SK-N-SH (cell line): ENCODE measurements at regions of chr1 and their contacts with region 1.

Region 1: DNA sequence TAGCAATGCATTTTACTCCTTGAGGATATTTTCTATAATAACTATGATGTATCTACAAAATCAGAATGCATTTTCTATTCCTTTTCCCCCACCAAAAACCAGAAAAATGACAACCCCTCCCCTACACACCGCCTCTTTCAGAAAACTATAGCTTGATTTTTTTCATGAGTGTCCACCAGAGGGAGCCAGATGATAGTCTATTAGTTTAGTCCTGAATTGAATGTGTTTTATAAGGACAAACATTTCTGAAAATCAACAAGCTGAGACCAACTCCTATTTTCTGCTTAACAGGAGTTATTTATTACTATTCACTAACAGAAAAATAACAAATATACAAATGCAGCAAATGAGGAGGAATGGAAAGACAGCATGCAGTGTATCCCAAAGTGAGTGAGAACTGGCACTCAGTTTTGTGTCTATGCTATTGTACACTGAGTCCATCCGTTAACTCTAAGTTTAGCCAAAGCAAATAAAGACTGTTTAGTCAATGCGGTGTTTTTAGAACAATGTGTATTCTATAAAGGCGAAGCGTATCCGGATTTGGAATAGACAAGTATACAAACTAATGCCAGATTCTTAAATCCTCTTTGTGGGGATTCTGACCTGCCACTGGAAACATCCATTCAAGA is 182.6 kb downstream of the VAV3 start:
- DNase-seq: peak; percentile 25
- H3K4me3 ChIP-seq: no peak overlapping the region; a peak in 1 of 4 replicates
- H3K27ac ChIP-seq: no peak overlapping the region
- H3K4me1 ChIP-seq: peaks cover 0 to 9% of the 10 kb centered on the region in 2 experiments; a peak in 2 of 4 replicates
- H3K27me3 ChIP-seq: no peaks in the 10 kb centered on the region
- CTCF ChIP-seq: peak; percentile 81
- EP300 ChIP-seq: no peak
- RAD21 ChIP-seq: peak; percentile 89

Region 2: DNA sequence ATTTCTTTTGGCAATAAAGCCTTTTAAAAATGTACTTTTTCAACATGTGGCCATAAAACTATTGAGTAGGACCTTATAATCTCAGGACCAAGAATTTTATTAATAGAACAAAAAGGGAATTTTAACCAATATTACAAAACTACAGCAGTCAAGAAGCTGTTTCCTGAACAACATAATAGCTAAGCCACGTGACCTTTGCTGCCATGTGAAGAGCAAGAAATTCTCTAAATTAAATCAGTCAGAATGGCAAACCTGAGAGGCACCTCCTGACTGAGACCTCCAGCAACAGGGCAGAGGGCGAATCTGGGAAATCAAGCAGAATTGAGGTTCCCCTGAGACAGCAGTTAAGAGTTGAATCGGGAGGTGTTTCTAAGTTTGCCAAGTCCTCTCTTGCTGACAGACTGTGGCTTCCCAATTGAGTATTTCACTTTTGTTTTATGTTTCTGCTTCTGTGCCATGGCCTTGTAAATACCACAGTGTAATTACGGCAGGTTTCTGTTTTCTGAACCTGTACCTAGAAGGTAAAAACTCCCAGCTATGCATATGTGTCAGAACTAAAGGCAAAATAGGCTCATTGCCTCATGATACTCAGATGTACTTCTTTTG is 283.1 kb before region 1 on chr1:
- CTCF ChIA-PET with region 1: no interaction called
- POLR2A ChIA-PET with region 1: no interaction called
- DNase-seq: no peak
- H3K4me3 ChIP-seq: no peak overlapping the region
- H3K27ac ChIP-seq: no peak overlapping the region
- H3K4me1 ChIP-seq: no peaks in the 10 kb centered on the region
- H3K27me3 ChIP-seq: no peaks in the 10 kb centered on the region
- CTCF ChIP-seq: no peak
- EP300 ChIP-seq: no peak
- RAD21 ChIP-seq: no peak

Region 3: GRCh38 chr1:107710015-107710414 is 72.3 kb before region 1 on chr1:
- CTCF ChIA-PET with region 1: no interaction called
- POLR2A ChIA-PET with region 1: no interaction called
- DNase-seq: no peak
- H3K4me3 ChIP-seq: no peak overlapping the region
- H3K27ac ChIP-seq: no peak overlapping the region
- H3K4me1 ChIP-seq: no peaks in the 10 kb centered on the region; a peak in 1 of 4 replicates
- H3K27me3 ChIP-seq: no peaks in the 10 kb centered on the region
- CTCF ChIP-seq: no peak
- EP300 ChIP-seq: no peak
- RAD21 ChIP-seq: no peak

Region 4: DNA sequence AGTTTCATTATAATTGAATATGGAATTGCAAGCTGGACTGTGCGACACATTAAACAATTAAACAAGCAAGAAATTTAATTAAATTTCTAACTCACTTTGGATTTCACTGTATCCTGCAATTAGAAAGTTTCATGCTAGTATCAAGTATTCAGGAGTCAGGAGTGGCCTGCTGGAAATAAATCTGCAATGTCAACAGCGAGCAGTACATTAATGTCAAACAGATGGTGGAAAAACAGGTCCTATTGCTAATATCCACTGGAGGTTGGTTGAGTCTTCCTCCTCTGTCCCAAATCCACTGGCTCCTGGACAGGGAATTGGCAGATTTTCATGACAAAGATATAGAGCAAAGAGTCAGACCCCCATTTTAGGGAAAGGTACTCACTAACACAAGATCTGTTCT is 54.4 kb before region 1 on chr1:
- CTCF ChIA-PET with region 1: no interaction called
- POLR2A ChIA-PET with region 1: no interaction called
- DNase-seq: peak; percentile 40
- H3K4me3 ChIP-seq: no peak overlapping the region
- H3K27ac ChIP-seq: peak overlapping the region in 1 of 2 experiments; percentile 76; a peak in 2 of 4 replicates
- H3K4me1 ChIP-seq: peaks cover 0 to 11% of the 10 kb centered on the region in 2 experiments; a peak in 2 of 4 replicates
- H3K27me3 ChIP-seq: no peaks in the 10 kb centered on the region
- CTCF ChIP-seq: no peak
- EP300 ChIP-seq: peak in 1 of 2 experiments; percentile 24; a peak in 1 of 4 replicates
- RAD21 ChIP-seq: no peak

Region 5: GRCh38 chr1:107767156-107767582 is 15.2 kb before region 1 on chr1:
- CTCF ChIA-PET with region 1: interaction called, 16 read pairs
- POLR2A ChIA-PET with region 1: no interaction called
- DNase-seq: no peak
- H3K4me3 ChIP-seq: no peak overlapping the region
- H3K27ac ChIP-seq: no peak overlapping the region
- H3K4me1 ChIP-seq: no peaks in the 10 kb centered on the region
- H3K27me3 ChIP-seq: no peaks in the 10 kb centered on the region
- CTCF ChIP-seq: no peak
- EP300 ChIP-seq: no peak
- RAD21 ChIP-seq: no peak

Region 6: DNA sequence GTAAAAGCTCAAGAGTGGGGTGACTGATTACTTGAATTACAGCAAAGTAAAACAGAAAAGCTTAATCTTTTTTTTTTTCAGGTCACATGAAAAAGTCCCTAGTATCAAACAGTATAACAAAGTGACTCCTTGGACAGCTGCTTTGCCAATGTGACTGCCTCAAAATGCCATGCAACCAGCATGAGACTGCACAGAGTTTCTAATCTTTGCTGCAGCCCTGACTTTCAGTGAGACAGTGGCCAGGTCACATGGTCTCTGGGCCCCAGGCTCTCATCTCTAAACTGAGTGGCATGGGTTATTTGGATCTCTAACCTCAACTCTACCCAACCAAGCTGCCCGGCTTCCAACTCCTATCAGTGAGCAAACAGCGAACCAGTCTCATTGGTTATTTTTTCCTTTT is 13.7 kb after region 1 on chr1:
- CTCF ChIA-PET with region 1: interaction called, 31 read pairs
- POLR2A ChIA-PET with region 1: no interaction called
- DNase-seq: no peak
- H3K4me3 ChIP-seq: no peak overlapping the region
- H3K27ac ChIP-seq: no peak overlapping the region
- H3K4me1 ChIP-seq: no peaks in the 10 kb centered on the region; a peak in 2 of 4 replicates
- H3K27me3 ChIP-seq: no peaks in the 10 kb centered on the region
- CTCF ChIP-seq: no peak
- EP300 ChIP-seq: no peak
- RAD21 ChIP-seq: no peak

Region 7: DNA sequence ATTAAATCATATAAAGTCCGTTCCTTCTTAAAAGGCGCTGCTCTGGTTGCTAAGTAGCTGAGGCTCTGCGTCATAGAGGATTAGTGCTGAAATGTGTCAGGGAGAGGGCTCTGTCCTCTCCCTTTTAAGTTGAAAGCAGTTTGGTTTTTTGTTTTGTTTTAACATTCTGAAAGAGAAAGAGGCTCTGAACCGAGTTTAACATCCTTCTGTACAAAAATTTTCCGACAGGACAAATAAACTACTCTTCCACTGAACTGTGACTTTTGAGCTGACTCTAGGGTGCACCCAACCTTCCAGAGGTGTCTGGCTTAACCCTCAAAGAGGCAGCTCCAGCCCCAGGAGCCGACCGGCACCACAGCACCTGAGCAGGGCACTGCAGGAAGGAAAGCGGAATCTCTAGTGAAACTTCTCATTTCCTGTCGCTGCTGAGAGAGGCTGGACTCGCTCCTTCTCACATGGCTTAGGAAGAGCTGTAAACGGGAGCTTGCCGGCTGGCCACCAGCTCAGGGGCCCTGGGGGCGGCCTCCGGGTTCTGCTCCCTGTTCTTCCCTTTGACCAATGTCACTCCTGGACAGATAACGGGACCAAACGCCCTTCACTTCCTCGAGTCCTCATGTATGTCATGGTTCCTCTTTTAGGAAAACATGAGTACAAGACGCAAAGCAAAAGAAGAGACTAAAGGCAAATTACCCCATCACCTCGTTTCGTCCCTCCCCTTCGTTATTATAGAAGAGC is 181.4 kb after region 1 on chr1:
- CTCF ChIA-PET with region 1: interaction called, 12 read pairs
- POLR2A ChIA-PET with region 1: no interaction called
- DNase-seq: peak; percentile 23
- H3K4me3 ChIP-seq: no peak overlapping the region
- H3K27ac ChIP-seq: no peak overlapping the region
- H3K4me1 ChIP-seq: peaks cover 0 to 9% of the 10 kb centered on the region in 2 experiments; a peak in 1 of 4 replicates
- H3K27me3 ChIP-seq: peaks cover 19% of the 10 kb centered on the region
- CTCF ChIP-seq: no peak
- EP300 ChIP-seq: no peak
- RAD21 ChIP-seq: no peak

Region 8: DNA sequence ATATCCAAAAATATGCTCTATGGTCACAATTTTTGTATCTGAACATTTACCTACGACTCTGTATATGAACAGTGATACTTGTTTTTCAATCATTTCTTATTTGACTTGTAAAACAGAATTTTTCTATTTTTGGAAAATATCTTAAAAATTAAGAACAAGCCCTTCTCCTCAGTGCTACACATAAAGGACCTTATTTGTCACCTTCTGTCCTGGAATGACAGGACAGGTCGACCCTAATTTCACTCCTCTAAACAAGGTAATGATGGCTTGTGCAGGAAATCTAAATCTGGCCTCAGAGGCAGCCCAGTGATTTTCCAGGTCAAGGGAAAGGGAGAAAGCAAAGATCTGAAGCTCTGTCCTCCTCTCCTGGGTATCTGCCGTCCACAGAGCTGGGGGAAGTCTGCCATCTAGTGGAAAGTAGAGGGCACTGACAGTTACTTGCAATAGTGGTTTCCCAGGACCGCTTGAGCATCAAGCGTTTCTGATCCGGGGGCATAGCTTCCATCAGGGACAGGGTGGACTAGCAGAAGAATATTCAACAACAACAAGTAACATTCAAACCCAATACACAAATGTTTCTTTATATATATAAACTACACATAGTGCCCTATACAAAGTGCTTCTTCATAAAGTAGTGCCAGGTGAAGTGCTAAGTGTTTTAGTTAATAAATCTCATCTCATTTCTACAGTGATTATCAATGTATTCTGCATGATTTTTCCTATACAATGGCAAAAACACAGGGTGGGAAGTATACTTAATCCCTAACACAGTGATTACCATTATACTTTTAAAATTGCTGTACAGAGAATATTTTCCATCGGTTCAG is 343.2 kb after region 1 on chr1:
- CTCF ChIA-PET with region 1: interaction called, 597 read pairs
- POLR2A ChIA-PET with region 1: interaction called, 6 read pairs
- DNase-seq: peak; percentile 79
- H3K4me3 ChIP-seq: no peak overlapping the region; a peak in 1 of 4 replicates
- H3K27ac ChIP-seq: no peak overlapping the region
- H3K4me1 ChIP-seq: no peaks in the 10 kb centered on the region
- H3K27me3 ChIP-seq: no peaks in the 10 kb centered on the region
- CTCF ChIP-seq: peak; percentile 89
- EP300 ChIP-seq: no peak
- RAD21 ChIP-seq: peak; percentile 100

Region 9: DNA sequence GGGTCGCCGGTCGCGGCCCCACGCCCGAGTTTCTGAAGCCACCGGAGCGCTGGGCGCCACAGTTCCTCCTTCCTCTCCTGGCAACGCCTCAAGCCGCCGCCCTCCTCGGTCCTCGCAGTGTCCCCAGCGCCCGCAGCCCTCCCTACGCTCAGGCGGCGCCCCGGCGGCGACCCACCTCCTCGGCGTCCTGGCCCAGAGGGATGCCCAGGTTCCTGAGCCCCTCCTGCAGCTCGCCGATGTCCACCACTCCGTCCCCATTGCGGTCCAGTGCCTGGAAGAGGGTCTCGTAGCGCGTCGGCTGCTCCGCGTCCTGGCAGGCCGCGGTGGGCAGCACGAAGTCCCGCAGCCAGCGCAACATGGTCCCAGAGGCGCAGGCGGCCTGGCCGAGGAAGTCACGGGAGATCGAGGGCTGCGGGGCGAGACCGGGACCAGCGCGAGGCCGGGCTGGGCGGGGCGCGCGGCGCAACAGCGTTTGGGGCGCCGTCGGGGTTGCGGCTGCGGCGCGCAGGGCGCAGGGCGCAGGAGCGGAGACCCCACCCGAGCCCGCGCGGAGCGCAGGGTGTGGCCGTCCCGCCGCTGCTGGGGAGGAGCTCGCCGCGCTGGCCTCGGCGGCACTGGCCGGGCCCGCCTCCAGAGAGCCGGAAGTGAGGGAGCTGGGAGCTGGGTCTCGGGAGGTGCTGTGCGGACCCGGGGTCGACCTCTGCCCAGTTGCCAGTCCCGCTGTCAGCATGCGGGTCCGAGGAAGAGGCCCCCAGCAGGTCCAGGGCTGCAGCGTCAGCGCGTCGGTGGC is 417.6 kb after region 1 on chr1 and contains the start of gene SLC25A24:
- CTCF ChIA-PET with region 1: interaction called, 14 read pairs
- POLR2A ChIA-PET with region 1: no interaction called
- DNase-seq: peak; percentile 92
- H3K4me3 ChIP-seq: peak within 1 kb of the TSS; percentile 81 to 85
- H3K27ac ChIP-seq: peak within 1 kb of the TSS; percentile 75 to 92
- H3K4me1 ChIP-seq: peaks cover 7 to 12% of the 10 kb centered on the region in 2 experiments; a peak in 3 of 4 replicates
- H3K27me3 ChIP-seq: no peaks in the 10 kb centered on the region
- CTCF ChIP-seq: no peak
- EP300 ChIP-seq: no peak
- RAD21 ChIP-seq: no peak
- polyA plus RNA-seq, gene SLC25A24: 11.3 and 14.9 TPM in 2 replicates